ENCODE measurements at regions of chr6 and their contacts with region 1.

Region 1: DNA sequence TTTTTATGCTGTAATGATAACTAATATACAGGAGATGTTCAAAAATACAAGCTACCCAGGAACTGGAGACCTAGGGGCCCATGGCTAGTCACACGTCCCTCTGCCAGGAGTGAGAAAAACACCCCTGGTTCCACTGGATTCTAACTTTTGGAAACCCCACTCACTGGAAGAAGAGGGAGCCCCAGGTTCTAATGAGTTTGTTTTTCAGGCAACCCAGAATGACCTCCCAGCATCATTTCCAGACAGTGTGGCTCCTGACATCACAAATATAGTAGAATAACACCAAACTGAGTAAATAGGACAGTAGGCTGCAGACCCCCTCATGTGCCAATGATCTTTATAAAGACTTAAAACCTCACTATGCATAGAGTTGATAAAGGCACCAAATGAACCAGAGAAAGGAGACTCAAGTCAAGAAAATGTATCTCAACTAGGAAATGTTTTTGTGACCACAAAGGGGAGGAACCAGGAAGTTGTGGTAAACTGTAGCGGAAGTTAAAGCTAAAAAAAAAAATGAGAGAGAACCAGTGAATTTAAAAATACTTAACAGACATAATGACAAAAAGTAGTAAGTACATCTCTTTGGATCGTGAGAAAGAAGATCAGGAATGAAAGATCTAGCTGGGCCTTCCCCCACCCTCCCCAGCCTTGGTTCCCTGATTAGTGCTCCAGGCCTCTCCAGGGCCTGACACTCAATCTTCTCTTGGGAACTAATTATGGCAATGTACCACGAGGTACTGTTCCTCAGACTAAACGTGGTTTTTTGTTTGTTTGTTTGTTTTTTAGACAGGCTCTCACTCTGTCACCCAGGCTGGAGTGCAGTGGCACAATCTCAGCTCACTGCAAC is 19.8 kb downstream of the HLA-E start:
- DNase-seq: peak; percentile 41
- H3K4me3 Mint-ChIP-seq: peak overlapping the region; percentile 49
- H3K27ac Mint-ChIP-seq: peak overlapping the region; percentile 91
- H3K4me1 Mint-ChIP-seq: peaks cover 66% of the 10 kb centered on the region
- H3K27me3 Mint-ChIP-seq: no peaks in the 10 kb centered on the region

Region 2: DNA sequence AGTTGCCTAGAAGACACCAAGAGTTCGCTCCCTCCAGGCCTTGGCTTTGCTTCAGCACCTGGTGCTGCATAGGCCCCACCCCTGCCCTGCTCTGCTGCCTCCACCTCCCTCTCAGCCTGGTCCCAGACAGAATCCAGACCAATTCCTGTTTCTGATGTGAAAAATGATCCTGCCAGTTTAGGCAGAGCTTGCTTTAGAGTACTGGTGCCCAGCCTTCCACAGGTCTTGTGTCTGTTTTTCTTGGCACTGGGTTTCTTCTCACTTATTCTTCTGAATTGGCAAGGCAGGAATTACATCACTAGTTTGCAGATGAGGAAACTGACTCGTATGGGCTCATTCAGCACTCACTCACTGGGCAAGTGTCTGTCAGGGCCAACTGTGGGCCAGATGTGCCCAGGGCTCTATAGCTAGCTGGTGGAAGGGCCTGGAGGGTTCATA is 513.8 kb before region 1 on chr6:
- CTCF ChIA-PET with region 1: no interaction called
- DNase-seq: no peak
- H3K4me3 Mint-ChIP-seq: no peak overlapping the region
- H3K27ac Mint-ChIP-seq: no peak overlapping the region
- H3K4me1 Mint-ChIP-seq: peaks cover 10% of the 10 kb centered on the region
- H3K27me3 Mint-ChIP-seq: peaks cover 39% of the 10 kb centered on the region

Region 3: DNA sequence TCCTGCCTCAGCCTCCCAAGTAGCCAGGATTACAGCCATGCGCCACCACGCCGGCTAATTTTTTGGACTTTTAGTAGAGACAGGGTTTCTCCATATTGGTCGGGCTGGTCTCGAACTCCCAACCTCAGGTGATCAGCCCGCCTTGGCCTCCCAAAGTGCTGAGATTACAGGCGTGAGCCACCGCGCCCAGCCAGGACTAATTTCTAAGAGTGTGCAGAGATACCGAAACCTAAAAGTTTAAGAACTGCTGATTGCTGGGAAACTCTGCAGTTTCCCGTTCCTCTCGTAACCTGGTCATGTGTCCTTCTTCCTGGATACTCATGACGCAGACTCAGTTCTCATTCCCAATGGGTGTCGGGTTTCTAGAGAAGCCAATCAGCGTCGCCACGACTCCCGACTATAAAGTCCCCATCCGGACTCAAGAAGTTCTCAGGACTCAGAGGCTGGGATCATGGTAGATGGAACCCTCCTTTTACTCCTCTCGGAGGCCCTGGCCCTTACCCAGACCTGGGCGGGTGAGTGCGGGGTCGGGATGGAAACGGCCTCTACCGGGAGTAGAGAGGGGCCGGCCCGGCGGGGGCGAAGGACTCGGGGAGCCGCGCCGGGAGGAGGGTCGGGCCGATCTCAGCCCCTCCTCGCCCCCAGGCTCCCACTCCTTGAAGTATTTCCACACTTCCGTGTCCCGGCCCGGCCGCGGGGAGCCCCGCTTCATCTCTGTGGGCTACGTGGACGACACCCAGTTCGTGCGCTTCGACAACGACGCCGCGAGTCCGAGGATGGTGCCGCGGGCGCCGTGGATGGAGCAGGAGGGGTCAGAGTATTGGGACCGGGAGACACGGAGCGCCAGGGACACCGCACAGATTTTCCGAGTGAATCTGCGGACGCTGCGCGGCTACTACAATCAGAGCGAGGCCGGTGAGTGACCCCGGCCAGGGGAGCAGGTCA is 19.8 kb before region 1 on chr6 and contains the start of gene HLA-E:
- CTCF ChIA-PET with region 1: interaction called, 11 read pairs
- DNase-seq: peak; percentile 94
- H3K4me3 Mint-ChIP-seq: peak within 1 kb of the TSS; percentile 99
- H3K27ac Mint-ChIP-seq: peak within 1 kb of the TSS; percentile 100
- H3K4me1 Mint-ChIP-seq: peaks cover 49% of the 10 kb centered on the region
- H3K27me3 Mint-ChIP-seq: peaks cover 19% of the 10 kb centered on the region